PC-3 (cell line): ENCODE measurements at regions of chr12 and their contacts with region 1.

Region 1: DNA sequence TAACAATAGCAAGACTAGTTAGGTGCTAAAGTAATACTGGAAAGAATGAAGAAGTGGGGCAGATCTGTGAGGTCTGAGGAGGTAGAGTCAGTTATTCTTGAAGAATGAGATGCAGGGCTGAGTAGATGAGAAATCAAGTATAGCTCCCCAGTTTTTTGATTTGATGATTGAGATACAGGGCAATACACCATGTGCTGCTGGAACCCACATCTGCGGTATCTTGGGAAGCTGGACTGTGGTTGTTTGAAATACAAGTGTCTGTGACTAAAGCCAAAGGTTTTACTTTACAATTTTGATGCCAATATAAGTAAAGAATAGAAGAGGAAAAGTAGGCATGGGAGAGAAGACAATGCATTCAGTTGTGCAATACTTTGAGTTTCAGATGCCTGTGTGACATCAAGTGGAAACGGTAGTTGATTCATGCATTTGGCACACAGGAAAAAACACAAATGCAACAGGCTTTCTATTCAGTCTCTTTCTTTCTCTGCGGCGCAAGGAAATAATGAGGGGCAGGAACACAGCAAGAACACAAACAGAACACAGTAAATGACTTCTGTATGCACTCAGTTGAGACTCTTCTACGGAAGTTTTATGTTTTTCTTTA is 190.2 kb upstream of the SLC38A2 start:
- DNase-seq: peak; percentile 95
- ATAC-seq: peak; percentile 78
- H3K4me3 ChIP-seq: peak overlapping the region; percentile 33; the same call in 1 of the 2 replicates
- H3K27ac ChIP-seq: peak overlapping the region; percentile 98
- H3K4me1 ChIP-seq: peaks cover 52% of the 10 kb centered on the region
- H3K27me3 ChIP-seq: no peaks in the 10 kb centered on the region
- CTCF ChIP-seq: no peak

Region 2: GRCh38 chr12:46537387-46537955 is 25.3 kb before region 1 on chr12:
- CTCF ChIA-PET with region 1: no interaction called
- POLR2A ChIA-PET with region 1: no interaction called
- intact Hi-C with region 1: no loop called
- DNase-seq: no peak
- ATAC-seq: no peak
- H3K4me3 ChIP-seq: no peak overlapping the region
- H3K27ac ChIP-seq: no peak overlapping the region
- H3K4me1 ChIP-seq: no peaks in the 10 kb centered on the region
- H3K27me3 ChIP-seq: no peaks in the 10 kb centered on the region
- CTCF ChIP-seq: no peak

Region 3: GRCh38 chr12:46585854-46586621 is 23.3 kb after region 1 on chr12:
- CTCF ChIA-PET with region 1: no interaction called
- POLR2A ChIA-PET with region 1: no interaction called
- intact Hi-C with region 1: loop called (anchors 1 kb)
- DNase-seq: peak; percentile 93
- ATAC-seq: peak; percentile 100
- H3K4me3 ChIP-seq: peak overlapping the region; percentile 35; the same call in 1 of the 2 replicates
- H3K27ac ChIP-seq: peak overlapping the region; percentile 57
- H3K4me1 ChIP-seq: peaks cover 15% of the 10 kb centered on the region
- H3K27me3 ChIP-seq: no peaks in the 10 kb centered on the region
- CTCF ChIP-seq: no peak

Region 4: GRCh38 chr12:46608431-46609272 is 45.9 kb after region 1 on chr12:
- CTCF ChIA-PET with region 1: no interaction called
- POLR2A ChIA-PET with region 1: no interaction called
- intact Hi-C with region 1: loop called (anchors 2 kb)
- DNase-seq: peak; percentile 30
- ATAC-seq: peak; percentile 86
- H3K4me3 ChIP-seq: no peak overlapping the region
- H3K27ac ChIP-seq: peak overlapping the region; percentile 11
- H3K4me1 ChIP-seq: peaks cover 9% of the 10 kb centered on the region
- H3K27me3 ChIP-seq: no peaks in the 10 kb centered on the region
- CTCF ChIP-seq: no peak

Region 5: DNA sequence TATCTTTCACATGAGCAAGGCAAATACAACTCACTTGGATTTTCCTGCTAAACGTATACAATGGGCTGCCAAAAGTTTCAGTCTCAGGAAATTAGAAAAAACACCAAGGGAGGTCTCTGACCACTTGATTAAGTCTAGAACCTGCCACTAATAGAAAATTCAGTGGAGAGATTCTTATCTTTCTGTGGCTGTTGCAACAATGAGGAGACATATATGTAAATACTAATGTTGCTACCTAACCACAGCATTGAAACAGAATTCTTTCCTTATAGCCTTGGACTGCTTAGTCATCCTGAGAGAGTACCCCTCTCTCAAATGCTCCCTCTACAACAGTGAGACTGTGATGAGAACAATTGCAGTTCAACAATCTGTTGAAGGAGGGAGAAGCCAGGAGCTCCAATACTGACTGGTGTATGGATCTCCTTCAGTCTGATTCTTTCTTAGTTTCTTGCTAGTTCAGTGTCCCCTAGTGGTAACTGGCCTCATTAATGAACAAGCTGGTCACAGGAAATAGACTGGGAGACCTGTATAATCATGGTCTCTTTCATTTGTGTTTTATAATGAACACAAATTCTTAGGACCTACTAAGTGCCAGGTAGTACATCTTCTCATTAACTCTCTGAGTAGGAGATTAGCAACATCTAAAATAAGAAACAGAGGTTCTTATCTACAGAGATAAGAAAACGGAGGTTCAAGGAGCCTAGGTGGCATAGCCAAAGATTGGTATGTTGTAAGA is 98.6 kb after region 1 on chr12:
- CTCF ChIA-PET with region 1: no interaction called
- POLR2A ChIA-PET with region 1: no interaction called
- intact Hi-C with region 1: loop called (anchors 2 kb)
- DNase-seq: peak; percentile 80
- ATAC-seq: peak; percentile 53
- H3K4me3 ChIP-seq: no peak overlapping the region
- H3K27ac ChIP-seq: peak overlapping the region; percentile 56
- H3K4me1 ChIP-seq: peaks cover 57% of the 10 kb centered on the region
- H3K27me3 ChIP-seq: no peaks in the 10 kb centered on the region
- CTCF ChIP-seq: peak; percentile 87

Region 6: GRCh38 chr12:46921048-46921763 is 358.5 kb after region 1 on chr12:
- CTCF ChIA-PET with region 1: no interaction called
- POLR2A ChIA-PET with region 1: interaction called, 13 read pairs
- intact Hi-C with region 1: no loop called
- DNase-seq: peak; percentile 92
- ATAC-seq: peak; percentile 98
- H3K4me3 ChIP-seq: no peak overlapping the region
- H3K27ac ChIP-seq: peak overlapping the region; percentile 84
- H3K4me1 ChIP-seq: peaks cover 15% of the 10 kb centered on the region
- H3K27me3 ChIP-seq: no peaks in the 10 kb centered on the region
- CTCF ChIP-seq: no peak